Naive thymus-derived CD4-positive, alpha-beta T cell (primary cell): ENCODE measurements at regions of chr13 and their contacts with region 1.

Region 1: DNA sequence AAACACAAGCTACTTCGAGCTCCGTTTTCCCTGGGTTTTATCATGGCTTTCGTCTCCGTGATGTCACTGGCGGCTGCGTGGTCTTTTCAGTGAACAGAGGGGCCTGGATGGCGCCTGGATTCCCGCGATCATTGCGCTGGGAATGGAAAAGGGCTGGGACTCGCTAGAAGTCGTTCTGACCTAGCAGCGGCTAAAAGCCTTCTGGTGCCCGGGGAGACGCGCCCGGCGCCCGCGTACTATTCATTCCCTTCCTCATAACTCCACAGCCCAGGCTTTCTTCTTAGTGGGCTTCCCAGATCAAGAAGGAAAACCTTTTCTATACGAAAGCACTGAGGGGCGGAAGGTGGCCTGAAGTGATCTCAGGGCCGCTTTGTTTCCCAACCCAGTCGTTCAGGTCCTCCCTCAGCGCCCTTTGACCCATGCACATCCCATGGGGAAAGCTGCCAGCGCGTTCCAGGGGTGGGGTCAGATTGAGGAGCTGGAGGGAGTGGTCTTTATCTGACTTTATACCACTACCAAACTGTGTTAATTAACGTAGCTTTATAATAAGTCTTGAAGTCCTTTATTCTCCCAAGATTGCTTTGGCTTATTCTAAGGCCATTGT is 96.6 kb downstream of the ELF1 start:
- DNase-seq: no peak
- ATAC-seq: no peak
- H3K4me3 ChIP-seq: no peak overlapping the region
- H3K4me3 Mint-ChIP-seq: peak overlapping the region in 9 of 10 donors; percentile 53 to 100 (median 72)
- H3K27ac ChIP-seq: no peak overlapping the region
- H3K27ac Mint-ChIP-seq: peak overlapping the region; percentile 54 to 96 (median 91)
- H3K4me1 ChIP-seq: peaks cover 0 to 8% of the 10 kb centered on the region in 2 donors
- H3K4me1 Mint-ChIP-seq: peaks cover 11 to 33% (median 23%) of the 10 kb centered on the region in 7 donors
- H3K27me3 ChIP-seq: no peaks in the 10 kb centered on the region
- H3K27me3 Mint-ChIP-seq: no peaks in the 10 kb centered on the region

Region 2: DNA sequence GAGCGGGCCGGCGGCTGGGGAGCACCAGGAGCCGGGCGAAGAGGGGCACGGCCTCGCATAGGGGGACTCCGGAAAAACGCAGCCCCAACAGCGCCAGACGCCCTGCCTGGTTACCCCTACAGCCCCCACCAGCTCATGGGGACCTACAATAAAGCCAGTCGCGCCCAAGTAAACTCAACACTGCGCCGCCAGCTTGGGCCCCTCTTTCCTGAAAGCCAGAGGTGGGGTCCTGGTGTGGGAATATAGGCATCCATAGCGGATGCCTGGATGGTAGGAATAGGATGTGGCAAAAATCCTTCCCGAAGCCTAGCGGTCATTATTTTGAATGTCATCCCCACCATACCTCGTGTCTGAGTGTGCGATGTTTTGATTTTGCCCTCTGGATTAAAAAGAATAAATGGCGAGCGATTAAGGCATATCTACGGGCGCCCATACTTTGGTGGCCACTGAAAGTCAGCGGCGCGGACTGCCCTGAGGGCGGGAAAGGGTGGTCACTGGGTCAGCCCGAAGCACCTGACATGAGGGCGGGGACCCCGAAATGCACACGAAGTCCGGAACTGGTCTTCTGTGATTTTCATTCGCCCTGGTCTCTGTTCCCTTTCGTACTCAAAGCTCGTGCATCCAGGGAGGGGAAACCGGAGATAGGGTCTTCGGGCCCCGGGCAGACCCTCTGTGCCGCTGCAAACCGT is 1884.5 kb before region 1 on chr13 and contains the starts of genes NHLRC3 and PROSER1:
- CTCF ChIA-PET with region 1: no interaction called
- POLR2A ChIA-PET with region 1: no interaction called
- intact Hi-C with region 1: loop called (anchors 1 to 10 kb)
- DNase-seq: peak; percentile 60 to 86 (median 78)
- ATAC-seq: peak; percentile 87
- H3K4me3 ChIP-seq: peak within 1 kb of the TSS; percentile 95
- H3K4me3 Mint-ChIP-seq: peak within 1 kb of the TSS; percentile 92 to 99 (median 96)
- H3K27ac ChIP-seq: peak within 1 kb of the TSS; percentile 82
- H3K27ac Mint-ChIP-seq: peak within 1 kb of the TSS; percentile 92 to 97 (median 95)
- H3K4me1 ChIP-seq: peaks cover 7 to 28% of the 10 kb centered on the region in 2 donors
- H3K4me1 Mint-ChIP-seq: peaks cover 36 to 78% (median 65%) of the 10 kb centered on the region in 7 donors
- H3K27me3 ChIP-seq: no peaks in the 10 kb centered on the region
- H3K27me3 Mint-ChIP-seq: no peaks in the 10 kb centered on the region
- total RNA-seq, gene NHLRC3: 13.0 to 30.6 (median 23.6) TPM
- total RNA-seq, gene PROSER1: 36.1 to 65.7 (median 47.3) TPM

Region 3: DNA sequence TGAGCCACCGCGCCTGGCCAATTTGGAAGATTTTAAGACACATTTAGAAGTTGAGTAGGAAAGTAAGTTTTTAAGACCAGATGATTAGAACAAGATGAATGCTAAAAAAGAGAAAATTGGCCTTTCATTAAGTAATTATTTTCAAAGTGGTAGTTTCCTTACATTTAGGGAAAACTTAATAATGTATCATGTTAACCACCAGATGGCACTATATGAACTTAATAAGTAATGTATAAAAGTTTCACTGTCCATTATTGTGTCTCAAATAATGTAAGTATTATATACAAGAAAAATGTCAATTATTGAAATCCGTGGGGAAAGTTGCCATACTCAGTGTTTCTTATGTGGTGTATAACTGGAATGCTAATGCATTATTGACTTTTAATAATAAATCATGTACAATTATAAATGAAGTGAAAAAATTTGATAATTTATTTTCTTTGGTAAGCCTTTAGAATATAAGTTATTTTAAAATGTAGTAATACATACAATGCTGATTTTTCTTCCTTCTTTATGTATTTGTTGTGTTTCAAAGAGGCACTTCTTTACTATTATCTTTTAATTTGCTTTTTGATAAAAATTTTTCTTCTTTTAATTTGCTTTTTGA is 1237.9 kb before region 1 on chr13:
- CTCF ChIA-PET with region 1: no interaction called
- POLR2A ChIA-PET with region 1: no interaction called
- intact Hi-C with region 1: loop called in 1 of 2 experiments (anchors 10 kb)
- DNase-seq: peak in 6 of 9 donors; percentile 6 to 44 (median 34)
- ATAC-seq: peak; percentile 53
- H3K4me3 ChIP-seq: no peak overlapping the region
- H3K4me3 Mint-ChIP-seq: no peak overlapping the region
- H3K27ac ChIP-seq: no peak overlapping the region
- H3K27ac Mint-ChIP-seq: no peak overlapping the region
- H3K4me1 ChIP-seq: no peaks in the 10 kb centered on the region
- H3K4me1 Mint-ChIP-seq: peaks cover 0 to 20% (median 3%) of the 10 kb centered on the region in 7 donors
- H3K27me3 ChIP-seq: no peaks in the 10 kb centered on the region
- H3K27me3 Mint-ChIP-seq: no peaks in the 10 kb centered on the region

Region 4: GRCh38 chr13:40732658-40733057 is 189.9 kb before region 1 on chr13:
- CTCF ChIA-PET with region 1: no interaction called
- POLR2A ChIA-PET with region 1: no interaction called
- intact Hi-C with region 1: no loop called
- DNase-seq: no peak
- ATAC-seq: peak; percentile 10
- H3K4me3 ChIP-seq: no peak overlapping the region
- H3K4me3 Mint-ChIP-seq: no peak overlapping the region
- H3K27ac ChIP-seq: no peak overlapping the region
- H3K27ac Mint-ChIP-seq: peak overlapping the region in 4 of 9 donors; percentile 4 to 74 (median 26)
- H3K4me1 ChIP-seq: no peaks in the 10 kb centered on the region
- H3K4me1 Mint-ChIP-seq: peaks cover 10 to 33% (median 22%) of the 10 kb centered on the region in 7 donors
- H3K27me3 ChIP-seq: no peaks in the 10 kb centered on the region
- H3K27me3 Mint-ChIP-seq: no peaks in the 10 kb centered on the region

Region 5: GRCh38 chr13:40777166-40777808 is 145.3 kb before region 1 on chr13:
- CTCF ChIA-PET with region 1: interaction called, 5 read pairs
- POLR2A ChIA-PET with region 1: interaction called, 4 read pairs
- intact Hi-C with region 1: loop called in 1 of 2 experiments (anchors 1 kb)
- DNase-seq: peak in 2 of 9 donors; percentile 15 to 44
- ATAC-seq: peak; percentile 78
- H3K4me3 ChIP-seq: peak overlapping the region; percentile 37
- H3K4me3 Mint-ChIP-seq: peak overlapping the region; percentile 68 to 92 (median 82)
- H3K27ac ChIP-seq: peak overlapping the region; percentile 61
- H3K27ac Mint-ChIP-seq: peak overlapping the region; percentile 94 to 99 (median 97)
- H3K4me1 ChIP-seq: peaks cover 21 to 24% of the 10 kb centered on the region in 2 donors
- H3K4me1 Mint-ChIP-seq: peaks cover 19 to 36% (median 32%) of the 10 kb centered on the region in 7 donors
- H3K27me3 ChIP-seq: no peaks in the 10 kb centered on the region
- H3K27me3 Mint-ChIP-seq: no peaks in the 10 kb centered on the region

Region 6: GRCh38 chr13:40910324-40911050 is 12.1 kb before region 1 on chr13:
- CTCF ChIA-PET with region 1: no interaction called
- POLR2A ChIA-PET with region 1: no interaction called
- intact Hi-C with region 1: no loop called
- DNase-seq: no peak
- ATAC-seq: no peak
- H3K4me3 ChIP-seq: no peak overlapping the region
- H3K4me3 Mint-ChIP-seq: no peak overlapping the region
- H3K27ac ChIP-seq: no peak overlapping the region
- H3K27ac Mint-ChIP-seq: no peak overlapping the region
- H3K4me1 ChIP-seq: peaks cover 0 to 5% of the 10 kb centered on the region in 2 donors
- H3K4me1 Mint-ChIP-seq: peaks cover 5 to 32% (median 16%) of the 10 kb centered on the region in 7 donors
- H3K27me3 ChIP-seq: no peaks in the 10 kb centered on the region
- H3K27me3 Mint-ChIP-seq: no peaks in the 10 kb centered on the region

Region 7: DNA sequence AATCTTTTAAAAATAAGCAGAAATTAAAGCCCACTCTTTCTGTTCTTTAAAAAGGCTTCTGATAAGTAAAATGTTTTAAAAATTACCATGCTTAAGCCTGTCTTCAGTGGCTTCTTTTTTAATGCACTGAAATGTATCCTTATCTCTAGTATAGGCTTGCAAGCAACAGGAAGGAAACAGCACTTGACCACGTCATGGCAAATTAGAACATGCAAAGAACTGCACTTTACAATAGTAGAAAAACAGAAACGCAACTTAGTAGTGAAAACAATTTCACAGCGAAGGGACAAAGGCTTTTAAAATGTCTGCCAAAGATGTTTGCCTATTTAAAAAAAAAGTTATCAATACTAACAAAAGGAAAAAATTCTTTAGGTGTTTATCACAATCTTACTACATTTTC is 60.2 kb after region 1 on chr13:
- CTCF ChIA-PET with region 1: interaction called, 3 read pairs
- POLR2A ChIA-PET with region 1: interaction called, 10 read pairs
- intact Hi-C with region 1: loop called (anchors 1 to 2 kb)
- DNase-seq: peak in 8 of 9 donors; percentile 41 to 90 (median 80)
- ATAC-seq: peak; percentile 82
- H3K4me3 ChIP-seq: no peak overlapping the region
- H3K4me3 Mint-ChIP-seq: peak overlapping the region; percentile 76 to 99 (median 94)
- H3K27ac ChIP-seq: peak overlapping the region; percentile 86
- H3K27ac Mint-ChIP-seq: peak overlapping the region; percentile 93 to 98 (median 96)
- H3K4me1 ChIP-seq: peaks cover 30 to 34% of the 10 kb centered on the region in 2 donors
- H3K4me1 Mint-ChIP-seq: peaks cover 40 to 77% (median 65%) of the 10 kb centered on the region in 7 donors
- H3K27me3 ChIP-seq: no peaks in the 10 kb centered on the region
- H3K27me3 Mint-ChIP-seq: no peaks in the 10 kb centered on the region

Region 8: GRCh38 chr13:41132512-41133152 is 210.1 kb after region 1 on chr13 and contains the start of gene KBTBD6:
- CTCF ChIA-PET with region 1: no interaction called
- POLR2A ChIA-PET with region 1: no interaction called
- intact Hi-C with region 1: loop called (anchors 1 to 10 kb)
- DNase-seq: peak; percentile 76 to 93 (median 87)
- ATAC-seq: peak; percentile 98
- H3K4me3 ChIP-seq: peak within 1 kb of the TSS; percentile 77
- H3K4me3 Mint-ChIP-seq: peak within 1 kb of the TSS; percentile 94 to 99 (median 98)
- H3K27ac ChIP-seq: peak within 1 kb of the TSS; percentile 67
- H3K27ac Mint-ChIP-seq: peak within 1 kb of the TSS; percentile 91 to 97 (median 93)
- H3K4me1 ChIP-seq: peaks cover 15 to 24% of the 10 kb centered on the region in 2 donors
- H3K4me1 Mint-ChIP-seq: peaks cover 32 to 60% (median 54%) of the 10 kb centered on the region in 7 donors
- H3K27me3 ChIP-seq: no peaks in the 10 kb centered on the region
- H3K27me3 Mint-ChIP-seq: no peaks in the 10 kb centered on the region
- total RNA-seq, gene KBTBD6: 3.9 to 9.2 (median 7.7) TPM

Region 9: DNA sequence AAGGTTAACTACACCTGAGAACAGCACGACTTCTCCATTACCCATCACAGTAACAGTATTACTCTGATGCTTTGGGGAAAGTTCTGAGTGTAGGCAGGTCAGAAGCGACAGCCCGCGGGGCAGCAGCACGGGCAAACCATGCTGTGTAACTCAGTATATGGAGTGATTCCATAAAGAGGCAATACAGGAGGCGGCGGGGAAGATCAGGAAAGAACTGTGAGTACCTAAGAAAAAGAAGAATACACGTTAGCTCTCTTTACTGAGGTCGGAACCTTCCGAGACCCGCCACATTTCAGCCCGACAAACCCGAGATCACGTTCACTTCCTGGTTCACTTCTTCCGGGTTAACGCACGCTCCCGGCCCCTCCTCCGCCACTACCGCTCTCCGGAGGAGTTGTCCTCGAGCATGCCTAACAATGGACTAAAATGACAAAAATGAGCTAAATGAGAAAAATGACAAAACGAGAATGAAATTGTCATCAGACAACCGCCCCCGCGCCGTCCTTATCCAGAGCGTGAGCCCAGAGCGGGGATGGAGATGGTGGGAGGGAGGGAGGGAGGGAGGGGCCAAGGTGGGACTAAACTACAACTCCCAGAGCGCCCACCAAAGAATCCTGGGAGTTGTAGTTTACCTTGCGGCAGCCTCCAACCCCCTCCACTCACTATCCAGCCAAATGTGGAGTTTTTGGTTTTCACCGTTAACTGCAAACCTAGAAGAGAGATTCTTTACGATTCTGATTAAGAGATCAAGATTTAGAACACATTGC is 340.9 kb after region 1 on chr13 and contains the start of gene MTRF1:
- CTCF ChIA-PET with region 1: no interaction called
- POLR2A ChIA-PET with region 1: no interaction called
- intact Hi-C with region 1: loop called (anchors 1 to 2 kb)
- DNase-seq: peak; percentile 70 to 91 (median 88)
- ATAC-seq: peak; percentile 94
- H3K4me3 ChIP-seq: peak within 1 kb of the TSS; percentile 76
- H3K4me3 Mint-ChIP-seq: peak within 1 kb of the TSS; percentile 84 to 100 (median 96)
- H3K27ac ChIP-seq: peak within 1 kb of the TSS; percentile 79
- H3K27ac Mint-ChIP-seq: peak within 1 kb of the TSS; percentile 92 to 99 (median 96)
- H3K4me1 ChIP-seq: peaks cover 0 to 3% of the 10 kb centered on the region in 2 donors
- H3K4me1 Mint-ChIP-seq: peaks cover 10 to 61% (median 28%) of the 10 kb centered on the region in 7 donors
- H3K27me3 ChIP-seq: no peaks in the 10 kb centered on the region
- H3K27me3 Mint-ChIP-seq: no peaks in the 10 kb centered on the region
- total RNA-seq, gene MTRF1: 21.7 to 38.2 (median 30.9) TPM